ENCODE measurements at regions of chr1 and their contacts with region 1.

Region 1: DNA sequence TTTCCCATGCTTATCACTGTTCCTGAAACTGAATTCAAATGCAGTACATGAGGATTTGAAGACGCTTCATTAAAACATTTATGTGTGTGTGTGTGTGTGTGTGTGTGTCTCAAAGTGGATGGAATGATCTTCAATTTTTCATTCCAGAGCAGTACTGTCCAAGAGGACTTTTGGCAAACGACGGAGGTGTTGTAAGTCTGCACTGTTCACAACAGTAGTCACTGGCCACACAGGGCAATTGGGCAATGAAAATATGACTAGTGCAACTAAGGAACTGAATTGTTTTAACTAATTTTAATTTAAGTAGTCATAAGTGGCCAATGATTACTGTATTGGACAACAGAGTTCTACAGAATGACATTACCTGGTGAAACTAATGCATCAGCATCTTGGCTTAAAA is 5.0 kb downstream of the TAF5L start:
- DNase-seq: no peak
- ATAC-seq: no peak
- H3K4me3 ChIP-seq: no peak overlapping the region
- H3K27ac ChIP-seq: no peak overlapping the region
- H3K4me1 ChIP-seq: peaks cover 0 to 9% of the 10 kb centered on the region in 2 donors
- H3K27me3 ChIP-seq: no peaks in the 10 kb centered on the region

Region 2: DNA sequence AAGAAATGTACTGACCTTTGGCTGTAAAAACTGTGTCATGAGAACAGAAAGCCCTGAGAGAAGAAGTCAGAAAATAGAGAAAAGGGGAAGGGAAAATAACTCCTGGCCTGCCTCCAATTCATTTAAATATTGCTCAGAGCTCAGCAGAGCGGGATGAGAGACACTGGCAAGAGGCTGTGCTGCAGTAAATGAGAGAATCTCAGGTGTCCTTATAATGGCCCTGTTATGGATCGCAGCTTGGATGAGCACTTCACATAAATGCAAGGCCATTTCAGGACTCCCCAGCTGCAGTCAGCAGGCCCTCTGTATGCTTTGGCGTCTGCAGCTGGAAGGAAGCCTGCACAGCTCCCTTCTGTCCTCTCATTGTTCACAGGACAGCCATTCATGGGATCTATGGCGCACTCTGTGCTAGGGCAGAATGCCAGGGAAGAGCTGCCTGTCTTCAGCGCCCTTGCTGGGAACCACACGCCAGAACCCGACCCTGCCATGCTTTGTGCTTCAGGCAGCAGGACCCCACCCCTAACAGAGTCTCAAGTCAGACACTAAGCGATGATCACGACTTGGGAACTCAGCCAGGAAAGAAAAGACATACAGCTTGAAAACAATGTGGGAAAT is 41.7 kb before region 1 on chr1:
- intact Hi-C with region 1: loop called in 1 of 2 experiments (anchors 5 kb)
- DNase-seq: peak in 1 of 2 donors; percentile 62
- ATAC-seq: peak; percentile 75
- H3K4me3 ChIP-seq: no peak overlapping the region
- H3K27ac ChIP-seq: peak overlapping the region in 1 of 2 donors; percentile 43
- H3K4me1 ChIP-seq: peaks cover 0 to 3% of the 10 kb centered on the region in 2 donors
- H3K27me3 ChIP-seq: no peaks in the 10 kb centered on the region

Region 3: GRCh38 chr1:229661022-229661877 is 40.4 kb after region 1 on chr1:
- intact Hi-C with region 1: no loop called
- DNase-seq: peak; percentile 86 to 93
- ATAC-seq: peak; percentile 90
- H3K4me3 ChIP-seq: no peak overlapping the region
- H3K27ac ChIP-seq: no peak overlapping the region
- H3K4me1 ChIP-seq: no peaks in the 10 kb centered on the region
- H3K27me3 ChIP-seq: no peaks in the 10 kb centered on the region

Region 4: GRCh38 chr1:229792012-229792895 is 171.4 kb after region 1 on chr1:
- intact Hi-C with region 1: no loop called
- DNase-seq: no peak
- ATAC-seq: no peak
- H3K4me3 ChIP-seq: no peak overlapping the region
- H3K27ac ChIP-seq: no peak overlapping the region
- H3K4me1 ChIP-seq: no peaks in the 10 kb centered on the region
- H3K27me3 ChIP-seq: no peaks in the 10 kb centered on the region

Region 5: GRCh38 chr1:229893762-229894444 is 273.0 kb after region 1 on chr1:
- intact Hi-C with region 1: no loop called
- DNase-seq: no peak
- ATAC-seq: no peak
- H3K4me3 ChIP-seq: no peak overlapping the region
- H3K27ac ChIP-seq: no peak overlapping the region
- H3K4me1 ChIP-seq: no peaks in the 10 kb centered on the region
- H3K27me3 ChIP-seq: no peaks in the 10 kb centered on the region